Heart right ventricle (tissue), 16 donors: ENCODE measurements at regions of chr10 and their contacts with region 1.

Region 1: GRCh38 chr10:98038288-98038687 is 7.9 kb upstream of the CRTAC1 start:
- DNase-seq: no peak
- ATAC-seq: no peak
- H3K4me3 ChIP-seq: no peak overlapping the region
- H3K27ac ChIP-seq: no peak overlapping the region
- H3K4me1 ChIP-seq: no peaks in the 10 kb centered on the region
- H3K27me3 ChIP-seq: peaks cover 0 to 99% (median 63%) of the 10 kb centered on the region in 7 donors
- CTCF ChIP-seq: no peak

Region 2: DNA sequence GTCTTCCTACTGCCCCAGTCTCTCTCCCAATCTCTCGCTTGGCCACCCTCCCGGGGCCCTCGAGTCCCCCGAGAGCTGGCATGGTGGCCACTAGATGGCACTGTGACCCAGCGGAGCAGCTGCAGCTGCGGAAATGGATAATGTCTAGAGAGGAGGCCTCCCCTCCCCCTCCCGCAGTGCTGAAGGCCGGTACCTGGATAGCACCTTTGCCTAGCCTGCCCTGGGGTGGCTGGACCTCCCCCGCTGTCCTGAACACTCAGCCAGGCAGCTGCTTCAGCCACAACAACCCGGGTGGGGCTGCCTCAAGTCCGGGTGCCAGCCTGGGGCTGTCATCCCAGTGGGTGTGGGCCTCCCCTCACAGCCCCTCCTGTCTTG is 123.5 kb before region 1 on chr10:
- intact Hi-C with region 1: loop called in 9 of 10 experiments (anchors 1 to 5 kb)
- DNase-seq: peak; percentile 69 to 80
- ATAC-seq: peak; percentile 77 to 90 (median 86)
- H3K4me3 ChIP-seq: no peak overlapping the region
- H3K27ac ChIP-seq: no peak overlapping the region
- H3K4me1 ChIP-seq: peaks cover 0 to 21% (median 9%) of the 10 kb centered on the region in 9 donors
- H3K27me3 ChIP-seq: peaks cover 0 to 8% (median 4%) of the 10 kb centered on the region in 7 donors
- CTCF ChIP-seq: peak; percentile 88 to 95 (median 90)

Region 3: GRCh38 chr10:98528166-98528804 is 490.0 kb after region 1 on chr10:
- intact Hi-C with region 1: no loop called
- DNase-seq: no peak
- ATAC-seq: no peak
- H3K4me3 ChIP-seq: no peak overlapping the region
- H3K27ac ChIP-seq: no peak overlapping the region
- H3K4me1 ChIP-seq: no peaks in the 10 kb centered on the region
- H3K27me3 ChIP-seq: peaks cover 0 to 7% (median 0%) of the 10 kb centered on the region in 7 donors
- CTCF ChIP-seq: no peak